ENCODE measurements at regions of chr1 and their contacts with region 1.

Region 1: DNA sequence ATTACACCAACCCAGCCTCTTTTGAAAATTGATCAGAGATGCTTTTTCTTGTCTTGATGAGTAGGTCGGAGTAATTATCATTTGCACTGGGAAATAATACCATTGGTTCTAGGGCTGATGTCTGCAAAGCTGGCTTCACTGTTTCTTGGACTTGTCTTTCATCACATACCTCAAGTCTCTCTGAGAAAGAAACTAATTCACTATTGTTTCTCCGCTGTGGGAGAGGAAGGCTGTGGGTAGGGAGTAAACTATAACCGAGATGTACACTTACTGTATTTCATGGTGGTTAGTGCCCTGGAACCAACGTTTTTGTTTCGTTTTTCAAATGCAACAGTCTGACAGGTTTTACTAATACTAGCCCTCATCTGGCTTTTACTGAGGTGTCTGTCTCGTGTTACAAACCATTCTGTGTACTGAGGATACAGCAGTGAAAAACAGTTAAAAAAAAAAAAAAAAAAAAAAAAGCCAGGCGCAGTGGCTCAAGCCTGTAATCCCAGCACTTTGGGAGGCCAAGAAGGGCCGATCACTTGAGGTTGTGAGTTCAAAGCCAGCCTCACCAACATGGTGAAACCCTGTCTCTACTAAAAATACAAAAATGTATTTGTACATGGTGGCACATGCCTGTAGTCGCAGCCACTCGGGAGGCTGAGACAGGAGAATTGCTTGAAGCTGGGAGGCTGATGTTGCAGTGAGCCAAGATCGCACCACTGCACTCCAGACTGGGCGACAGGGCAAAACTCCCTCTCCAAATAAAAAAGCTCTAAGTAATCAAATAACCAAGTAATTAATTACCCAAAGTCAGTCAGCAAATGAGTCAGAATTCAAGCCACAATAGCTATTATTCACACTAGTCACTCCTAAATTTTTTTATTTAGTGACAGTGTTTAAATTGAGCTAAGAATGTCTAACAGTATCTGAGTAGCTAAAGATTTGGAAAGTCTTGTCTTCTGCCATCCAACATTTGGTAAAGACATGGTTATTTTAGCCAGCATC is 23.3 kb downstream of the TOMM20 start:
- DNase-seq: peak; percentile 46
- H3K4me3 ChIP-seq: no peak overlapping the region
- H3K27ac ChIP-seq: no peak overlapping the region
- H3K4me1 ChIP-seq: peaks cover 3% of the 10 kb centered on the region
- H3K27me3 ChIP-seq: no peaks in the 10 kb centered on the region
- CTCF ChIP-seq: no peak
- POLR2A ChIP-seq: no peak

Region 2: DNA sequence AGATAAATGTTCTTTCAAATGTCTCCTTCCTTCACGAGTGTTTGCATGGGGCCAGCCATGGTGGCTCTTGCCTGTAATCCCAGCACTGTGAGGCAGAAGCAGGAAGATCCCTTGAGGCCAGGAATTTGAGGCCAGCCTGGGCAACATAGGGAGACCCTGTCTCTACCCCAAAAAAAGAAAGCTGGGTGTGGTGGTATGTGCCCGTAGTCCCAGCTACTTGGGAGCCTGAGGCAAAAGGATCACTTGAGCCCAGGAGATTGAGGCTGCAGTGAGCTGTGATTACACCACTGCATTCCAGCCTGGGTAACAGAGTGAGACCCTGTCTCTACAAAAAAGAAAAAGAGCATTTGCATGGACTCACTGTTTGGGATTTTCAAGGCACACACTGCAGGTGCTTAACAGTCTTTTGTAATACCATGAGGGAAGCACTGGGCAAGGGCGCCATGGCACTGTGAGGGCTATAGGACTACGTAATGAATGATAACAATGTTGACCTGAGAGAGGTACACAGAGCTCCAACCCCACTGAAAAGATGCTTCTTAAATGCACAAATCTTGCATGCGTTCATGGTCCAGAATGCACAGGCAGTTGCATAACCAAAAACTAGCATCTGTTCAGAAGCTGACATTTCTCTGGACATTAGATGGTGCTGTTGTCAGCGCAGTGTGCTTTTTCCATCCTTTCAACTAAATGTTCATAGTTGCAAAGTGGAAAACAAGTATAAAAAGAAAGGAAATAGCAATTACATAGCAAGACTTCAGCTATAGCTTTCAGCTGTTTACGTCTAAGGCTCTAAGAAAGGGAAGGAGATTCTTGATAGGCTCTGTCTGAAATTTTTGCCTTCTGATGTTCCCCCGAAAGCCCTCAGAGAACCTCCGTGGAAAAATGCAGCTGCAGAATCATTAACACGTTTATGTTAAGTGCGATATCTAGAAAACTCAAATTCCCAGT is 618.6 kb before region 1 on chr1:
- CTCF ChIA-PET with region 1: interaction called, 8 read pairs
- POLR2A ChIA-PET with region 1: no interaction called
- dilution Hi-C with region 1: no loop called
- intact Hi-C with region 1: loop called (anchors 1 kb)
- DNase-seq: peak; percentile 84
- H3K4me3 ChIP-seq: no peak overlapping the region
- H3K27ac ChIP-seq: no peak overlapping the region
- H3K4me1 ChIP-seq: peaks cover 7% of the 10 kb centered on the region
- H3K27me3 ChIP-seq: peaks cover 10 to 12% of the 10 kb centered on the region in 2 experiments
- CTCF ChIP-seq: peak; percentile 54 to 55
- POLR2A ChIP-seq: no peak

Region 3: GRCh38 chr1:234758851-234759250 is 346.5 kb before region 1 on chr1:
- CTCF ChIA-PET with region 1: no interaction called
- POLR2A ChIA-PET with region 1: no interaction called
- dilution Hi-C with region 1: no loop called
- intact Hi-C with region 1: no loop called
- DNase-seq: no peak
- H3K4me3 ChIP-seq: no peak overlapping the region
- H3K27ac ChIP-seq: no peak overlapping the region
- H3K4me1 ChIP-seq: peaks cover 2% of the 10 kb centered on the region
- H3K27me3 ChIP-seq: peaks cover 0 to 4% of the 10 kb centered on the region in 2 experiments
- CTCF ChIP-seq: no peak
- POLR2A ChIP-seq: no peak

Region 4: DNA sequence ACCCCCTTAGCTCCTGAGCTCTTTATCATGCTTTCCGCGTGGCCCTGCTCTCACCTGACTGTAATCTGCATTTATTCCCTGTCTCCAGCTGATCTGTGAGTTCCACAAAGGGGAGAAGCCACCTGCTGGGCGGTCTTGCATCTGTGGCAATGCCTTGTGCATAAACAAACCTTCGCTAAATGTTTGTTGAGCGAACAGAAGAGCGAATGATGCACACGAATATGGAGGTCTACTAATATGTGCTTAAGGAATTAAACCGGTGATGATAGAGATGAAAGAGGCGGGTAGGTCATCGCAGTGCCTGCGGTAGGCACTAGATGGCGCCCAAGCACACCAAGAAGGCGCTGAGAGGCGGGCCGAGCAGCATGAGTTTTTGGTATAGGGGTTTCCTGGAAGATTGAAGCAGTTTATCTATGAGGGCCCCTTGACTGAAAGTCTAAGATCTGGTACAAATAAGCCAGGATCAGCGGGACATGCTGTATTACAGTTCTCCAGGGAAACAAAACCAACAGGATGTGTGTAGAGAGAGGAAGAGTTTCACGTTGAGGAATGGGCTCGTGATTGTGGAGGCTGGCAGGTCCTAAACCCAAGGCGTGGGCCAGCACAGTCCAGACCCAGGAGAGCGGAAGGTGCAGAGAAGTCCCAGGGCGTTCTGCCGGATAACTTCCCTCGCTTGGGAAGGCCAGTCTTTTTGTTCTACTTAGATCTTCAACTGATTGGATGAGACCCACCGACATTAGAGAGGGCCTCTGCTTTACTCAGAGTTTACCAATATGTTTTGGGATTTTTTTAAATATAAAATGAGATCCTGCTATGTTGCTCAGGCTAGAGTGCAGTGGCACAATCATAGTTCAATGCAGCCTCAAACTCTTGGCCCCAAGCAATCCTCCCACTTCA is 11.4 kb before region 1 on chr1:
- CTCF ChIA-PET with region 1: interaction called, 10 read pairs
- POLR2A ChIA-PET with region 1: no interaction called
- dilution Hi-C with region 1: no loop called
- intact Hi-C with region 1: no loop called
- DNase-seq: peak; percentile 78
- H3K4me3 ChIP-seq: no peak overlapping the region
- H3K27ac ChIP-seq: no peak overlapping the region
- H3K4me1 ChIP-seq: no peaks in the 10 kb centered on the region
- H3K27me3 ChIP-seq: peaks cover 0 to 3% of the 10 kb centered on the region in 2 experiments
- CTCF ChIP-seq: peak; percentile 93
- POLR2A ChIP-seq: no peak

Region 5: GRCh38 chr1:235122348-235122747 is 17.0 kb after region 1 on chr1:
- CTCF ChIA-PET with region 1: interaction called, 14 read pairs
- POLR2A ChIA-PET with region 1: no interaction called
- dilution Hi-C with region 1: no loop called
- intact Hi-C with region 1: no loop called
- DNase-seq: no peak
- H3K4me3 ChIP-seq: no peak overlapping the region
- H3K27ac ChIP-seq: no peak overlapping the region
- H3K4me1 ChIP-seq: peaks cover 7% of the 10 kb centered on the region
- H3K27me3 ChIP-seq: no peaks in the 10 kb centered on the region
- CTCF ChIP-seq: no peak
- POLR2A ChIP-seq: no peak

Region 6: GRCh38 chr1:235128456-235129328 is 23.3 kb after region 1 on chr1 and contains the start of gene TOMM20:
- CTCF ChIA-PET with region 1: interaction called, 3 read pairs
- POLR2A ChIA-PET with region 1: interaction called, 12 read pairs
- dilution Hi-C with region 1: no loop called
- intact Hi-C with region 1: no loop called
- DNase-seq: peak; percentile 99
- H3K4me3 ChIP-seq: peak within 1 kb of the TSS; percentile 79 to 99 (median 93)
- H3K27ac ChIP-seq: peak within 1 kb of the TSS; percentile 70
- H3K4me1 ChIP-seq: peaks cover 12% of the 10 kb centered on the region
- H3K27me3 ChIP-seq: no peaks in the 10 kb centered on the region
- CTCF ChIP-seq: no peak
- POLR2A ChIP-seq: peak; percentile 96
- total RNA-seq, gene TOMM20: 98.4 and 108 TPM in 2 replicates